Adrenal gland (tissue), 19 donors: ENCODE measurements at regions of chr6 and their contacts with region 1.

Region 1: DNA sequence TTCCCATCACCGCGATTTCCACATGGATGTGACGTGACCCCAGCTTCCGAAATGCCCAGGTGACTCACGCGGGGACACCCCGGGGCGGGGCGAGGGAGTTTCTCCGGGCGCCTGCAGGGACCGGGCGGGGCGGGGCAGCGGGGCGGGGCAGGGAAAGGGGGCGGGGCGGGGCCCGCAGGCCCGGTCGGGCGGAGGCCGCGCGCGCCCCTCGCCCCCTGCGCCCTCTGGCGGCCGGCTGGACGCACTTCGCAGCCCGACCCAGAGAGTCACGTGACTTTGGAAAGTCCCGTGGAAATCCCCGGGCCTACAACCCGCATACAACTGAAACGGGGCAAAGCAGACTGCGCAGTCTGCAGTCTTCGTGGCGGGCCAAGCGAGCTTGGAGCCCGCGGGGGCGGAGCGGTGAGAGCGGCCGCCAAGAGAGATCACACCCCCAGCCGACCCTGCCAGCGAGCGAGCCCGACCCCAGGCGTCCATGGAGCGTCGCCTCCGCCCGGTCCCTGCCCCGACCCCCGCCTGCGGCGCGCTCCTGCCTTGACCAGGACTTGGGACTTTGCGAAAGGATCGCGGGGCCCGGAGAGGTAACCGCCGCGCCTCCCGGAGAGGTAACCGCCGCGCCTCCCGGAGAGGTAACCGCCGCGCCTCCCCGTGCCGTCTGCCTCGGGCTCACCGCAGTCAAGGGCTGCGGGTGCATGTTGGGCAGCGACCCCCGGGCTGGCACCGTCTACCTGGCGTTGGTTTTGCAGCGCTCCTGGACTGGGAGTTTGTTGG is at the start of gene TNFAIP3:
- DNase-seq: peak; percentile 94 to 96 (median 96)
- H3K4me3 ChIP-seq: peak within 1 kb of the TSS; percentile 71 to 100 (median 88)
- H3K27ac ChIP-seq: peak within 1 kb of the TSS; percentile 54 to 97 (median 90)
- H3K4me1 ChIP-seq: peaks cover 0 to 29% of the 10 kb centered on the region in 2 donors
- H3K27me3 ChIP-seq: no peaks in the 10 kb centered on the region
- CTCF ChIP-seq: peak; percentile 30 to 96 (median 76)
- POLR2A ChIP-seq: peak; percentile 91 to 93
- total RNA-seq, gene TNFAIP3: 5.0 to 29.7 (median 15.6) TPM

Region 2: DNA sequence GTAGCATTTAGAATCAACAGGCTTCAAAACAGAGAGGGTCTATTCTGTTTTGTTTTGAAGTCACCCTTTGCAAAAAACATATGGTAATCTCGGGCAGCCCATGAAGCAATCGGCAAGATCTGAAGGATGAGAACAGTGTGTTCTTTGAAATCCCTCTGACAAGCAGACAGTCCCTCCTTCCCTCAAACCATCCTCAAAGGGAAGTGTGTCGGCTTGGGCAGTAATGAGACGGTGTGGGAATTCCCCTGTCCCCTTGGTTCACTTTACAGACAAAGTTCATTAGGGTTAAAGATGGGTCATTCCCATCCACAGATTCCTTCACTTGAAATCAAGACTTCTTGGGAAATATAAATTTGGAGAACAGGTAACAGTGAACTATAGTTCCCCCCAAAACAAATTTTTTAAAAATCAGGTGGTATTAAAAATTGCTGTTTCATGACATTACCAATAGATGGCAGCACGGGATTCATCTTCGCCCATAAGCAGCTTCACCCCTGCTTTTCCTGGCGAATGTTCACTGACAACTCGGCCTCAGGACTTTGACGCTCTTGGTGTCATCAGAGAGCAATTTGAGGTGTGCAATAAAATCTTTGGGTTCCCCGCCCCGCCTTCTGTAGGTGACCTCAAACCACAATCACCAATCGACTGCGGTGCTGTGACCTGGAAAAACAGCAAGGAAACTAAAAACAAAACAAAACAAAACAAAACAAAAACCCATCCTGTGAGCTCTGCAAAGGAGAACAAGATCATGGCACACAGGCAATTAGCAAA is 159.3 kb before region 1 on chr6:
- intact Hi-C with region 1: loop called (anchors 5 kb)
- DNase-seq: peak; percentile 59 to 84 (median 77)
- H3K4me3 ChIP-seq: peak overlapping the region in 1 of 4 donors; percentile 24
- H3K27ac ChIP-seq: peak overlapping the region in 1 of 5 donors; percentile 16
- H3K4me1 ChIP-seq: peaks cover 5 to 13% of the 10 kb centered on the region in 2 donors
- H3K27me3 ChIP-seq: no peaks in the 10 kb centered on the region
- CTCF ChIP-seq: peak; percentile 60 to 87 (median 78)
- POLR2A ChIP-seq: no peak

Region 3: GRCh38 chr6:137799950-137800568 is 67.0 kb before region 1 on chr6:
- intact Hi-C with region 1: loop called (anchors 5 to 10 kb)
- DNase-seq: peak; percentile 49 to 79 (median 69)
- H3K4me3 ChIP-seq: no peak overlapping the region
- H3K27ac ChIP-seq: no peak overlapping the region
- H3K4me1 ChIP-seq: peaks cover 0 to 14% of the 10 kb centered on the region in 2 donors
- H3K27me3 ChIP-seq: no peaks in the 10 kb centered on the region
- CTCF ChIP-seq: peak; percentile 52 to 70 (median 68)
- POLR2A ChIP-seq: no peak